Right ventricle myocardium inferior (tissue), 1 donor: ENCODE measurements at regions of chr9 and their contacts with region 1.

Region 1: DNA sequence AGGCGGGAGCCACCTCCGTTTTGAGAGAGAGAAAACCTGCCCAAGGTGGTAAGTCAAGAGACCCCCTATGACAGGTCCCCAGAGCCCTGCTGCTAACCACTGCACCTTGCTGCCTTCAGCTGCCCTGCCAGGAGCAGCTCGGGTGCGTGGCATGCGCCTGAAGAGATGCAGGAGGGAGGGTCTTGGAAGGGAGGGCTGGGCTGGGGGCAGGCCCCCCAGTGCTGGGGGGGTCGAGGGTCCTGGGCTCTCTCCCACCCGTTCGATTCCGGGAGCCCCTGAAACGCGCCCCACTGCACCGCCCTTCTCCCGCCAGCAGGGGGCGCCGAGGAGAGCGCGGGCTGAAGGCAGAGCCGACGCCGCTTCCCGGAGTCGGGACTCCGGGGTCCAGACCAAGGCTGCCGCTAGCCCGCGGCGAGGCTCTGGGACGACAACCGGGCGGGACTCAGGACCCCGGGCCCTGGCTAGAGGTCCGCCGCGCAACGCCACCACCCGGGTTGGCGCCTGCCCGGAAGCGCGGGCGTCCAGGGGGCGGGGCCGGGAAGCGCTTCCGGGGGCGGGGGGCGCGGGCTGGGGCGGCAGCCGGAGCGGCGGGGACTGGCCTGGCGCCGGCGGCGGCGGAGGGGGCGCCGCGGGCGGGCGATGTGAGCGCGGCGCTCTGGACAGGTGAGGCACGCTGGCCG is at the start of gene ZBTB34:
- DNase-seq: peak; percentile 84
- ATAC-seq: peak; percentile 75
- total RNA-seq, gene ZBTB34: 6.3 TPM

Region 2: GRCh38 chr9:126334721-126335621 is 525.2 kb before region 1 on chr9:
- intact Hi-C with region 1: no loop called
- DNase-seq: no peak
- ATAC-seq: peak; percentile 68

Region 3: GRCh38 chr9:126914458-126915280 is 54.5 kb after region 1 on chr9 and contains the start of gene RALGPS1:
- intact Hi-C with region 1: loop called (anchors 5 kb)
- DNase-seq: peak; percentile 98
- ATAC-seq: peak; percentile 99
- total RNA-seq, gene RALGPS1: 15.3 TPM

Region 4: DNA sequence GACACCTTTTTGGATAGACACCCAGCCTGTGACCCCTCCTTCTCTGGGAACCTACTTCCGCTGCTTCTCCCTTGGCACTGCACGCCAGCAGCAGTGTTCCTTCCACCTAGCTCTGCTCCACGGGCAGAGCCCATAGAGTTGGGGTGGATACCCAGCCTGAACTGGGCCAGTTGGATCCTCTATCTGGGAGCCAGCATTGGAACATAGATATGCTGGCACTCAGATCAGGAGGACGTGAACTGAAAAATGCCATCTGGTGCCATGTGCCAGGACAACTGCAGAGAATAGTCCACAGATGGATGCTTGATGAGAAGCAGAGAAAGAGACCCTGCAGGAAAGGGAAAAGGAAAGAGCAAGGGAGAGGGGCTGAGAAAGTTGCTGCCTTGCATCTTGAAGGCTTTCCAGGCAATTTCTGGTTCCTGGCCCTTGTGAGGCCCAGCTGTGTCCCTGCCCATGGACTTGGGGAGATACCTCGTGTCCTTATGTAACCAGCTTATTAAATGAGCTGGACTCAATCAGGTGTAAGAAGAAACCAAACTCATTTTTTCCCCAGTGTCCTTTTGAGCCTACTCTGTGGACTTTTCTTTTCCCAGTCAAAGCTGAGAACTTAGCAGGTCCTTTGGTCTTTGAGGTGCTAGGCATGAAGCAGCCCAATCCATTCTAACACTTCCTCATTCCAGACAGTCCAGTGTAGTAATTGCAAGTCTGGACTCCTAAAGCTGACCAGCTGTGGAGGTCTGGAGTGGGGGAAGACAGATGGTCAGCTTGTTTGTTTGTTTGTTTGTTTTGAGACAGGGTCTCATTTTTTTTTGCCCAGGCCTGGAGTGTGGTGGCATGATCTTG is 223.1 kb after region 1 on chr9:
- intact Hi-C with region 1: no loop called
- DNase-seq: no peak
- ATAC-seq: peak; percentile 55